HEK293T (cell line): ENCODE measurements at regions of chr1 and their contacts with region 1.

Region 1: DNA sequence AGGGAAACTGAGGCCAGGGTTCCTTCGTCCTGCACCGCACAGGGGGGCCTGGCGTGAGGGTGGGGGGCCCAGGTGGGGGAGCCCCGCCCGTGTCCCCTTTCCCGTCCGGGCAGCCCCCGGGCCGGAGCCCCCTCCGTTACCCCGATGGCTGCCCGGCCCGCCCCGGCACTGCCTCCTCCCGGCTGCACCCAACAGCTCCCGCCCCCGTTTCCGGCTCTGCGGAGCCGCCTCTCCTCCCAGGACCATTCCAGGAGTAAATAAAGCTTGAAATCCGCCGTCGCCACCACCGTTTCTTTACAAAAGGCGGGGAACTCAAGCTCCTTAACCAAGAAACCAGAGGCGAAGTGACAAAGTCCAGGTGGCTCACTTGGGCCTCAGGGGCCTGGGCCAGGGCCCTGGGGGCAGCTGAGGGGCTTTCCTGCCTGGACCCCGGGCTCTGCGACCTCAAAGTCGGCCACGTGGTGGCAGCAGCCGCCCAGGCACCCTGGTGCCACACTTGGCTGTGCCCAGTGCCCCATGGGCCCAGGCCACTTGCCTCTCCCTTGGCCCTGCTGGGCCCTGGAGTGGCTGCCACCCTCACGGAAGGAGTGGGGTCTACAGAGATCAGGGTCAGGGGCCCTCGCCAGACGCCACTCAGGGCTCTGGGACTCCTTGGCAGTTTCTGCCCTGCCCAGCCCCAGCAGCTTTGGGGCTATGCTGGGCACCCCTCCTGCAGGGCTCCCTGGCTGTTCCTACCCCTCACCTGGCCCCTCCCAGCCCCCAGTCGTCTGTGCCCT is 514 bp upstream of the FAAP20 start:
- DNase-seq: peak; percentile 76

Region 2: DNA sequence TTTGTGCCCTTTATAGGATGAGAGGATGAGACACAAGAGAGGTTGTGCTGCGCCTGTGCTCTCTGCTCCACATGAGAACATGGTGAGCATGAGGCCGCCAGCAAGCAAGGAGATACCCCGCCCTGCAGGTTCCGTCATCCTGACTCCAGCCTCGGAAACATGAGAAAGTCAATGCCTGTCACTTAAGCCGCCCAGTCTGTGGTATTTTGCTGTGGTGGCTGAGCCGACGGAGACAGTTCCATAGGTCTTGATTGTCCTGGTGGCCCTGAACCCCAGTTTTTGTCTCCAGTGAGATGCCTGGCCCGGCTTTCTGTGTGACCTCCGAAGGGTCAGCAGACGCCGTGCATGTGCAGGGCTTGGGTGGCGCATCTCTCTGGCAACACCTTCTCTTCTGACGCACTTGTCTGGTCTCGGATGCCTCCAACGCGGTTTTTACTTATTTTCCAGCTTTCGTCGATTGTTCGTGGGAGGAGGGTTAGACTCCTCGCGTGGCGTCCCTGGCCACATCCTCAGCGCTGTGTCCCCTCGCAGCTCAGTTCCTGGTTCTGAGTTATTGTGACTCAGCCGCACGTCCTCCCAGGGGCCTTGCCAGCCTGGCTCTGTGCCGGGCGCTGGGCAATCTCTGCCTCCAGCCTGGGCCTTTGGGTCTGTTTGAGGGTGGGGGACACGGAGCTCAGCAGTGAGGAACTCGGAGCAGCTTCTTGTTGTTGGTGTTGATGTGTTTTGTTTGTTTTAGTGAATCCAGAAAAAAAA is 70.5 kb before region 1 on chr1:
- CTCF ChIA-PET with region 1: no interaction called
- POLR2A ChIA-PET with region 1: no interaction called
- DNase-seq: no peak

Region 3: GRCh38 chr1:2212542-2213491 is 17.7 kb after region 1 on chr1:
- CTCF ChIA-PET with region 1: no interaction called
- POLR2A ChIA-PET with region 1: interaction called, 10 read pairs
- DNase-seq: peak; percentile 74

Region 4: GRCh38 chr1:2227346-2228153 is 32.5 kb after region 1 on chr1:
- CTCF ChIA-PET with region 1: interaction called, 4 read pairs
- POLR2A ChIA-PET with region 1: interaction called, 21 read pairs
- DNase-seq: peak; percentile 99

Region 5: DNA sequence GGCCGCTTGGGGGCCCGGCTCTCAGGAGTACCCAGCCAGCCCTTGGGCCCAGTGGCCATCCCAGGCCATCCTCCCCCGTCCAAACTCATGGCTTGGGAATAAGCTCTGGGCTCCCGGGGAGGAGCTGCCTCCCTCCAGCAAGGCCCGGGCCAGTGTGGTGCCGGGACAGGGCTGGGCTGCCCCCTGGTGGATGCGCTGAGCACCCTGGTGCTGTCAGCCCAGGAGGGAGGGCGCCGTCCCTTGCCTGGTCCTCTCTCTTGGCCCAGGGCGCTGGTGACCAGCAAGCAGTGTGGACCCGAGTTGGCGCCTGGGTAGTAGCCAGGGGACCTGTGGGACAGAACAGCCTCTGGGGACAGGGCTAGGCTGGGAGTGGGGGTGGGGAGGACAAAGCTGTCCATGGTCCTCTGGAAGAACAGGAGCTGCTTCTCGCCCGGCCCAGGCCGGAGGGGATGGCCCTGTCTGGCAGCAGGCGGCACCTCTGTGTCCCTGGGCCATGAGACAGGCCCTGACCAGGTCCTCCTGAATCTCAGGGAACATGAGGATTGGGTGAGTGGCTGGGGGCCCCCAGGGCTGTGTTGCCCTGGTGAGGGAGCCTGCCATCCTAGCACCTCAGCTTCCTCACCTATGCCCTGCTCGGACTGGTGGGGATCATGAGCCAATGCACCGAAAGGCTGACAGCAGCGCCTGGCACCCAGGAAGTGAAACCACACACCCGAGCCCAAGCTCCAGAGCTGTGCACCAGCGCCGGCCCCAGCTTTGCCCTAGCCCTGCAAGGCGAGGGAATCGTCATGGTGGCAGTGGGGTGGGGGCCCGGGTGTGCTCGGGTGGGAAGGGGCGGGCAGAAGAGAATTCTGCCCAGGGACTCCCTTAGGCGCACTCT is 186.9 kb after region 1 on chr1:
- CTCF ChIA-PET with region 1: interaction called, 65 read pairs
- POLR2A ChIA-PET with region 1: interaction called, 18 read pairs
- DNase-seq: peak; percentile 93

Region 6: DNA sequence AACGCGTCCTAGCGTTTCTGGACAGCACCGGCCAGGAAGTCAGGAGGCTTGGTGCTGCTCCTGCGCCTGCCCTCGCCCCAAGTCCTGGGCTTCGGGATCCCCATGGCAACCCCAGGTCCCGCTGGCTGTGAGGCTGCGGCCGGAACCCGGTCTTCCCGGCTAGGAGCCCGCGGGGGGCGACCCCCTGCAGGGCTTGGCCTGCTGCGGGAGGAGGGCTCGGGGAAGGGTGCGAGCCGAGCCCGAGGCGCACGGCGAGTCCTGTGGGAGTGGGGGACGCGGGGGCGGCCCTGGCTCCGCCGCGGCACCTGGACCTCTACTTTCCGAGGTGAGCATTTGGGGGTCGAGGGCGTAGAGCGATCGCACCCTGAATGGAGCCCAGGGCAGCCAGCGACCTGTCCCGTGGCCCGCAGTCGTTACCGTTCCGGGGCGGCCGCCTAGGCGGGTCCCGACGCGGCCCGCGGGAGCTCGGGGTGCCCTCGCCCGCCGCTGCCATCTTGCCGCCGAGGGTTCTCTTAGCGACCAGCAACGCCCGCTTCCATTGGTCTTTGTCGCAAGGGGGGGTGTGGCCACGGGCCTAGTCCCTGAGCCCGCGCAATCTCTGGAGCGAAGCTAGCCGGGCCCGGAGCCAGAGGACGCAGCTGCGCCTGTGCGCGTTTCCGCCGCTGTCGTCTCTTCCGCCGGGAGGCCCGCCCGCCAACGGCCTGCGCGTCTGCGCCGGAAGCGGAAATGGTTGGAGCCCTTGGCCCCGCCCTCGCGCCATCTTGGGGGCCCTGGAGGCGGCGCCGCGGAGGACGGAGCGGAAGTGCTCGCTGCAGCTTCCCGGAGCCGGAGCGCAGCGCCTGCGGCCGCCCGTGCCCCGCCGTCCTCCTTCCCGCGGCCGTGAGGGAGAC is 196.2 kb after region 1 on chr1 and contains the starts of genes MORN1 and RER1:
- CTCF ChIA-PET with region 1: interaction called, 3 read pairs
- POLR2A ChIA-PET with region 1: interaction called, 10 read pairs
- DNase-seq: peak; percentile 99